PC-9 (cell line): ENCODE measurements at regions of chr1 and their contacts with region 1.

Region 1: DNA sequence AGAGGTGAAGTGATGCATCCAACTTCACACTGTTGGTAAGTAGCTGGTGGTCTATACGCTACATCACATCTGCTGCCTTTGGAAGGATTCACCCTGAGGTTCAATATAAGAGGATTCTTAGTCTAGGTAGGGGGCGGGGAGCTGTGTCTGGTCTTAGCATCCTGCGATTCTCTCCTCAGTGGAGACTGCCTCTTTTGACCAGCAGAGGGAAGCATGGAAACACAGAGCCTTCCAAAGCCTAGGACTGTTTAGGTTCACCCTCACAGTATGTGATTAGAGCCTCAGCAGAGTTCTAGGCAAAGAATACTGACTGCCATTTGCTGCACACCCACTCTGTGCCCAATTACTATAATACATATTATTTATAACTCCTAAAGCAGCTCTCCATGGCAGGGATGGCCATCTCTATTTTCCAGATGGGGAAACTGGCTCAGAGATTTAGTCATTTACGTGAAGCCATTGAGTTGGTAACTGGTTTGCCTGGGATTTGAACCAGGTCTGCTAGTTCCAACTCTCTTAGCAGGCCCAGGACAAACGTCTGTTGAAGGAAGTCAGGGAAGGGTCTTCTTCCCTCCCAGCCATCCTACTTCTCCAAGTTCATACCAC is 28.9 kb upstream of the EFCAB14 start:
- DNase-seq: peak; percentile 61 to 67
- H3K4me3 ChIP-seq: no peak overlapping the region
- H3K27ac ChIP-seq: no peak overlapping the region
- H3K4me1 ChIP-seq: peaks cover 31% of the 10 kb centered on the region
- H3K27me3 ChIP-seq: no peaks in the 10 kb centered on the region
- CTCF ChIP-seq: peak; percentile 77

Region 2: GRCh38 chr1:46547481-46548383 is 200.1 kb before region 1 on chr1:
- CTCF ChIA-PET with region 1: interaction called, 12 read pairs
- POLR2A ChIA-PET with region 1: no interaction called
- intact Hi-C with region 1: no loop called
- DNase-seq: peak; percentile 32 to 33
- H3K4me3 ChIP-seq: no peak overlapping the region
- H3K27ac ChIP-seq: no peak overlapping the region
- H3K4me1 ChIP-seq: no peaks in the 10 kb centered on the region
- H3K27me3 ChIP-seq: peaks cover 22% of the 10 kb centered on the region
- CTCF ChIP-seq: peak; percentile 72

Region 3: GRCh38 chr1:46806271-46807020 is 58.7 kb after region 1 on chr1:
- CTCF ChIA-PET with region 1: interaction called, 3 read pairs
- POLR2A ChIA-PET with region 1: no interaction called
- intact Hi-C with region 1: loop called (anchors 1 kb)
- DNase-seq: peak; percentile 69 to 82
- H3K4me3 ChIP-seq: no peak overlapping the region
- H3K27ac ChIP-seq: peak overlapping the region; percentile 73
- H3K4me1 ChIP-seq: peaks cover 51% of the 10 kb centered on the region
- H3K27me3 ChIP-seq: no peaks in the 10 kb centered on the region
- CTCF ChIP-seq: no peak

Region 4: GRCh38 chr1:46862348-46862747 is 114.6 kb after region 1 on chr1:
- CTCF ChIA-PET with region 1: no interaction called
- POLR2A ChIA-PET with region 1: no interaction called
- intact Hi-C with region 1: loop called (anchors 5 kb)
- DNase-seq: no peak
- H3K4me3 ChIP-seq: no peak overlapping the region
- H3K27ac ChIP-seq: no peak overlapping the region
- H3K4me1 ChIP-seq: peaks cover 5% of the 10 kb centered on the region
- H3K27me3 ChIP-seq: no peaks in the 10 kb centered on the region
- CTCF ChIP-seq: no peak

Region 5: DNA sequence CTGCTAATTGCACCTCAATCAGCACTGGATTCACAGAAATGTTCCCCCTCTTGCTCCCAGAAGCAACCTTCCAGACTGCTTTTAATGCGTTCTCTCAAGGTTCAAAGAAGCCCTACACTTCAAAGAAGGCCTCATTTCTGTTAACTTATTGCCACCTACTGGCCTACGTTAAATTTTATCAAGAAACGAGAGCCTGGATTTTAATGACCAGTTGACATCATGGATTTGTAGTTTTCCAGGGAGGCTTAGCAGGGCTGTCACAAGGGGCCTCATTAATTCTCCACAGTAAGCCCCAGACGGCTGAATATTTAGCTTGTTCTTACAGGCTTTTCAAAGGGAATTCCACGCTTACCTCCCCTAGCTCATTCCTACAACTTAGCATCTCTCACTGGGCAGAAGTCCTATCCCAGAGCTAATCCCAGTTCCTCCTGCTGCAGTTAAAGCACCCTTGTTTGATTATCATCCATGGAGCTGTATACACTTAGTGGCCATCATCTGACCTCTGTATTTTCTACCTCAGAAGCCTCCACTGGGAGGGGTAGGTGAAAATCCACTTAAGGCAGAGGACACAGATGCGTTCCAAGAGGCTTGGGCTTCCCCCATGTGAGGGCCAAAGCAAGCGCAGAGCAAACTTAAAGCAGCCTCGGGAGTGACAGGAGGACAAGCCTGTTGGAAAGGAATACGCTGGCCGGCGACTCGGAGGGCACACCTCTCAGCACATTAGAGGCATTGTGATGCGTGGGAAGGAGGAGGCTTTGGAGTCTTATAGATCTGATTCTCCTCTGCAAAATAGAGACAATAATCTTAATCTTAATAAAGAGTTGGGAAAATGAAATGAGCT is 243.5 kb after region 1 on chr1:
- CTCF ChIA-PET with region 1: no interaction called
- POLR2A ChIA-PET with region 1: no interaction called
- intact Hi-C with region 1: loop called (anchors 1 kb)
- DNase-seq: no peak
- H3K4me3 ChIP-seq: no peak overlapping the region
- H3K27ac ChIP-seq: no peak overlapping the region
- H3K4me1 ChIP-seq: no peaks in the 10 kb centered on the region
- H3K27me3 ChIP-seq: no peaks in the 10 kb centered on the region; the same call in 1 of the 2 replicates
- CTCF ChIP-seq: peak; percentile 48

Region 6: GRCh38 chr1:47104816-47105215 is 357.0 kb after region 1 on chr1:
- CTCF ChIA-PET with region 1: no interaction called
- POLR2A ChIA-PET with region 1: no interaction called
- intact Hi-C with region 1: loop called (anchors 10 kb)
- DNase-seq: peak in 1 of 2 experiments; percentile 3
- H3K4me3 ChIP-seq: no peak overlapping the region
- H3K27ac ChIP-seq: no peak overlapping the region
- H3K4me1 ChIP-seq: 0 out of 2 replicates have a peak, but pooled peaks cover 8% of the 10 kb centered on the region
- H3K27me3 ChIP-seq: no peaks in the 10 kb centered on the region
- CTCF ChIP-seq: no peak